A549 (cell line): ENCODE measurements at regions of chr1 and their contacts with region 1.

Region 1: DNA sequence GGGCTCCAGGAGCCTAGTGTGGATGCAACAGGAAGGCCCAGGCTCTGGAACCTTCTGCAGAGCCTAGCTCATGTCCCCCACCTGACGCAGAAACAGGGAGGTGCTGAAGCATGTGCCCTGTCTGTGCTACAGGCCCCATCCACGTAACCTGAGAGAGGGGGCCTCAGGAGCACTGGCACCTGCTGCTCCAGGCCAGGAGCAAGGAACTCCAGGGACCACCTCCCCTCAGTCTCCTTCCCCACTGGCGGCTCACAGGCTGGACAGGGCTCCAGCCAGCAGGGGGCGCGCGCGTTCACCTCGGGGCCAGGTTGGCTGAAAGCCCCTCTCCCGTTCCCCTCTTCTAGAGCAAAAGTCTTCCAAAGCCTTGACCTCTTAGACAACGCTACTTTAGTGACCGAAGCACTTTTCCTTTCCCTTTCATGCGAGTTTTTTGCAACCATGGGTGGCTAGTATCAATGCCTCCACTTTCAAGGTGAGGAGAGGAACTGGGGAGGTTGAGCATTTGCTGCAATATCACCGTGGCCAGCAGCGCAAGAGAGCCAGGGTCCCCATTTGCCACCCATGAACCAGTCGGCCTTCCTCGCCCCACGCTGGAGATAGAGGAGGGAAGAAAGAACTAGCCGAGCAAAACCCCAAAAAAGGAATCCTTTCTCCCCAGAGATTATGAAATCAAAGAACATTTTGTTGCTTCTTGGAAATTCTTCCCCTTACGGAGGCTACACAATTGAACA is 52.4 kb upstream of the GPR157 start:
- DNase-seq: peak; percentile 60 to 68
- ATAC-seq: peak; percentile 80 to 83
- H3K4me3 ChIP-seq: peak overlapping the region; percentile 68
- H3K27ac ChIP-seq: peak overlapping the region; percentile 93 to 100
- H3K4me1 ChIP-seq: peaks cover 42% of the 10 kb centered on the region
- CTCF ChIP-seq: peak; percentile 85
- EP300 ChIP-seq: no peak
- POLR2A ChIP-seq: no peak
- RAD21 ChIP-seq: peak; percentile 40 to 48; a peak in 4 of 5 replicates

Region 2: GRCh38 chr1:9166289-9167235 is 14.8 kb before region 1 on chr1:
- CTCF ChIA-PET with region 1: interaction called, 20 read pairs
- POLR2A ChIA-PET with region 1: no interaction called
- DNase-seq: no peak
- ATAC-seq: no peak
- H3K4me3 ChIP-seq: no peak overlapping the region
- H3K27ac ChIP-seq: peak overlapping the region in 1 of 2 experiments; percentile 97; a peak in 3 of 6 replicates
- H3K4me1 ChIP-seq: peaks cover 46% of the 10 kb centered on the region
- CTCF ChIP-seq: no peak
- EP300 ChIP-seq: no peak
- POLR2A ChIP-seq: no peak
- RAD21 ChIP-seq: no peak

Region 3: DNA sequence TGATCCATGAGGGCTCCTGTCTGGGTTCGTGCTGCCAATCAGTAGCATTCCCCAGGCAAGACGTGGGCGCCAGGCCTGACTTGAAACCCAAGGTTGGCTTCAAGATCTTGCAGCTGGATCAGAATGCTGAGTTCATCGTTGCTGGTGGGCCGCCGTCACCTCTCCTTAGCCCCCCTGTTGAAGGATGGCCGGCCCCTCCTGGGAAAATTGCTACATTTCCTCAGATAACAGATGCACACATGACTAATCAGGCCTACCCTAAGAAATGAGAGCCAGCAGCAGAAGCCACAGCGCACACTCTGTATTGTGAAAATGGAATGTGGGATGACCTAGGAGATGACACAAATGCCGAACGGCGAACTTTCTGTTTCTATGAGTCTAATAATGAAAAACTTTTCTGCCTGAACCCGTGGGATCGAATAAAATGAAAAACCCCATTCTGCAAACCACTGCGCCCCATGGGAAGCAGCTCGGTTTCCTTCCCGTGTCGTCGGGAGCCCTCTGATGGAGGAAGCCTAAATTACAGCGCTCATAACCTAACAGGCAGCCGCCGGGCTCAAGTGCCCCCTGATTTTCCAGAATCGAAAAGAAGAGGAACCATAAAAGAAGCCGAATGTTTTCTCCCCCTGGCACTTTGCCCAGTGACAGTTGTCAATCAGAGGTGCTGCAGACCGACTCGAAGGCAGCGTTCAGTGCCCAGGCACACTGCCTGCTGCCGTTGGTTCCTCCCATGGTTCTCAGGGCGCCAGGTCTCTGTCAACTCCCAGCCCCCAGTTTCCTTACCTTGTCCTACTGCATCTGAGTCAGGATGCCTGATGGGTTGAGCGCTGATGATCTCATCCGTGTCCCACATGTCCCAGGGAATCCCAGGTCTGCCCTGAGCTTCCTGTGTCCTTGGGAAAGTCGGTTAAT is 15.0 kb after region 1 on chr1:
- CTCF ChIA-PET with region 1: interaction called, 38 read pairs
- POLR2A ChIA-PET with region 1: no interaction called
- DNase-seq: peak; percentile 29 to 48
- ATAC-seq: peak; percentile 72 to 84; a peak in 5 of 6 replicates
- H3K4me3 ChIP-seq: no peak overlapping the region
- H3K27ac ChIP-seq: peak overlapping the region; percentile 50 to 81; a peak in 5 of 6 replicates
- H3K4me1 ChIP-seq: peaks cover 29% of the 10 kb centered on the region
- CTCF ChIP-seq: peak; percentile 72
- EP300 ChIP-seq: no peak
- POLR2A ChIP-seq: no peak
- RAD21 ChIP-seq: peak; percentile 89 to 92

Region 4: GRCh38 chr1:9280015-9280860 is 98.9 kb after region 1 on chr1:
- CTCF ChIA-PET with region 1: no interaction called
- POLR2A ChIA-PET with region 1: no interaction called
- DNase-seq: peak; percentile 75 to 89
- ATAC-seq: peak; percentile 90 to 94
- H3K4me3 ChIP-seq: no peak overlapping the region
- H3K27ac ChIP-seq: peak overlapping the region; percentile 57 to 72; a peak in 5 of 6 replicates
- H3K4me1 ChIP-seq: peaks cover 28% of the 10 kb centered on the region
- CTCF ChIP-seq: no peak
- EP300 ChIP-seq: no peak
- POLR2A ChIP-seq: no peak
- RAD21 ChIP-seq: no peak

Region 5: DNA sequence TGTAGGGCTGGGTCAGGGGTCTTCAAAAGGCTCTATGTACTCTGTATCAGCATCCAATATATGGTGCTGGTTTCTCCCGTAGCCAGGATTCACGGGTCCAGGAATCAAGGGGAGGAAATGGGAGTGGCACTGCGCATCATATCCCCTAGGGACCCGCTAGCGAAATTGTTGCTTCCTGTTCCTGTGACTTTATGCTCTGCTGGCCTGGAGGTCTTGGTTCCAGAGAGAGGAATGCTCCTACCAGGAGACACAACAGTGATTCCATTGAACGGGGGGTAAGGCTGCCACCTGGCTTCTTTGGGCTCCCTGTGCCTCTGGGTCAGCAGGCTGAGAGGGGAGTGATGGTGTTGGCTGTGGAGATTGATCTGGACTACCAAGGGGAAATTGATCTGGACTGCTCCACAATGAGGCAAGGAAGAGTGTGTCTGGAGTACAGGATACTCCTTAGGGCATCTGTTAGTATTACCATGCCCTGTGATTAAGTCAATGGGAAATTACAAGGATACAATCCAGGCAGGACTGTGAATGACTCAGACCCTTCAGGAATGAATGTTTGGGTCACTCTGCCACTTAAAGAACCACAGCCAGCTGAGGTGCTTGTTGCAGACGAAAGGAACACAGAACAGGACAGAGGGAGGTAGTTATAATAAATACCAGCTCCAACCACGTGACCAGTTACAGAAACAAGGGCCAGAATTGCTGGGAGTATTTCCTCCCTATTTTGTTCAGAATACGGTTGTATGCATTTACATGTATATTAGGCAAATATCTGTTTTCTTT is 121.6 kb after region 1 on chr1:
- CTCF ChIA-PET with region 1: no interaction called
- POLR2A ChIA-PET with region 1: no interaction called
- DNase-seq: peak in 1 of 2 experiments; percentile 79
- ATAC-seq: peak; percentile 80 to 82
- H3K4me3 ChIP-seq: peak overlapping the region; percentile 23
- H3K27ac ChIP-seq: peak overlapping the region; percentile 94 to 98
- H3K4me1 ChIP-seq: peaks cover 78% of the 10 kb centered on the region
- CTCF ChIP-seq: no peak
- EP300 ChIP-seq: no peak
- POLR2A ChIP-seq: no peak
- RAD21 ChIP-seq: no peak